Esophagus muscularis mucosa (tissue), 4 donors: ENCODE measurements at regions of chr5 and their contacts with region 1.

Region 1: DNA sequence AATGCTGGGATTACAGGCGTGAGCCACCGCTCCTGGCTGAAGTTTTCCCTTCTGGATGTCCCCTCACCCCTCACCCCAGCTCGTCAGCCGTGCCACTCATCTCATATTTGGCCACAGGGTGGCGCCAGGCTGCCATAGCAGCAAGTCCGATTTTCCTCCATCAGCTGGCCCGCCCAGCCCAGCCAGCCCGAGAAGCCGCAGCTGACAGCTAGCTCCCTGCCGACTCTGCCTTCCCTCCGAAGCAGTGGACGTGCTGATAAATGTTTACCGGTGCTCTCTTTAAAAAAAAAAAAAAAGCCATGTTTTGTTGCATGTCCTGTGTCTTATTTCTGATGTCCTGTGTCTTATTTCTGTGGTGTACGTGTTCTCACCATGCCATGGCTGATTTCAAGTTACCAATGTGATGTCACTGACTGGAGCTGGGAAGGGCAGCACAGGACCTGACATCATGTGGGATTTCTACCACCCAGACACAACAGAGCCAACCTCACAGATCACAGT is 58.3 kb downstream of the PFDN1 start:
- DNase-seq: peak; percentile 97
- H3K4me3 ChIP-seq: no peak overlapping the region
- H3K27ac ChIP-seq: peak overlapping the region in 3 of 4 donors; percentile 67 to 79 (median 78)
- H3K4me1 ChIP-seq: peaks cover 73 to 88% (median 82%) of the 10 kb centered on the region in 4 donors
- H3K27me3 ChIP-seq: no peaks in the 10 kb centered on the region
- CTCF ChIP-seq: peak; percentile 87 to 90 (median 89)
- EP300 ChIP-seq: no peak
- POLR2A ChIP-seq: no peak

Region 2: DNA sequence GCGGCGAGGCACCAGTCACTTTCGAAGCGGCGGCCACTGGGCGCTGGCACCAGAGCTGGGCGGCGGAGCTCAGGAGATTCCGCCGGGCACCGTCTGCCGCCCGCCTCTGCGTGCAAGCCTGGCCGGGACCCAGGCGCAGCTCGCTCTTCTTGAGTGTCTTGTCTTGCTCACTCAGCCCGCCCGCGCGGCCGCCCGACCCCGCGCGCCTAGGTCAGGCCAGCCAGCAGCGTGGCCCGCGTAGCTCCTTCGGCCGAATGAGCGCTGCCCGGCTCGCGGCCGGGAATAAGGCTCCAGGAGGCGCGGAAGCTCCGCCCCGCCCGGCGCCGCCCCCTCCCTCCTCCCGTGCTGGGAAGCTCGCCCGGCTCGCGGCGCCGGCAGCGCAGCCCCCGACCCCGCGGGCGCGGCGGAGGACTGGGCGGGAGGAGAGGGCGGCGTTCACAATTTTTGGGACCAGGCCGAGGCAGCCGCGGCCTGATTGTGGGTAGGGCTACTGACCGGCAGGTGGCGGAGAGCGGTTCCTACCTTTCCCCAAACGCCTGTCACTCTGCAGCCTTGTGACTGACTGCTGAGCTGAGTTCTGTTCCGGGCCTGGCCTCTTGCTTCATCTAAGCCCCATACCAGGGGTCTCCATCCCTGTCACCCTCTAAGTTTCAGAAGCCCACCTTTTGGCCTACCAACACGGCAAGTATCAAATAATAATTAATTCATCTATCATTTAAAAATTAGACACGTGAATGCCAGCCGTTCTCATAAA is 102.0 kb after region 1 on chr5 and contains the start of gene HBEGF:
- intact Hi-C with region 1: loop called (anchors 1 kb)
- DNase-seq: no peak
- H3K4me3 ChIP-seq: peak within 1 kb of the TSS; percentile 65 to 87 (median 77)
- H3K27ac ChIP-seq: peak within 1 kb of the TSS; percentile 76 to 88 (median 86)
- H3K4me1 ChIP-seq: peaks cover 52 to 66% (median 59%) of the 10 kb centered on the region in 4 donors
- H3K27me3 ChIP-seq: no peaks in the 10 kb centered on the region
- CTCF ChIP-seq: peak; percentile 18 to 50 (median 37)
- EP300 ChIP-seq: no peak
- POLR2A ChIP-seq: peak; percentile 76
- total RNA-seq, gene HBEGF: 6.6 to 20.0 (median 8.2) TPM

Region 3: DNA sequence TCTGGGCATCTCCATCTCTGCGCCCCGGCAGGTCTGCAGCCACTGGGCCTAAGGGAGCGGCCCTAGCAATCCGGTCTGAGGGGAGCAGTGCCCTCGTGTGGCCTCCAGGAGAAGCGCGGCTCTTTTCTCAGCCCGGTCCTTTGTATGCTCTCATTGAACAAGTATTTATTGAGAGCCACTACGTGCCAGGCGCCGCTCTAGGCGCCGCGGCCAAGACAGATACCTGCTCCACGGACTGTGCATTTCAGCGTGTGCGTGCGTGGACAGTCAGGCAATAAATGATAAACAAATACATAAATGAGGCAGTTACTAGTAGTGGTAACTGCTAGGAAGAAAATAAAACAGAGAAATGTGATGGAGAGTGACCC is 113.1 kb after region 1 on chr5:
- intact Hi-C with region 1: loop called (anchors 2 kb)
- DNase-seq: peak; percentile 96
- H3K4me3 ChIP-seq: peak overlapping the region; percentile 17 to 29 (median 24)
- H3K27ac ChIP-seq: no peak overlapping the region
- H3K4me1 ChIP-seq: peaks cover 4 to 11% (median 10%) of the 10 kb centered on the region in 4 donors
- H3K27me3 ChIP-seq: no peaks in the 10 kb centered on the region
- CTCF ChIP-seq: peak; percentile 88 to 97 (median 93)
- EP300 ChIP-seq: no peak
- POLR2A ChIP-seq: no peak

Region 4: GRCh38 chr5:140481758-140482157 is 237.2 kb after region 1 on chr5:
- intact Hi-C with region 1: no loop called
- DNase-seq: no peak
- H3K4me3 ChIP-seq: no peak overlapping the region
- H3K27ac ChIP-seq: no peak overlapping the region
- H3K4me1 ChIP-seq: peaks cover 2 to 16% (median 11%) of the 10 kb centered on the region in 4 donors
- H3K27me3 ChIP-seq: no peaks in the 10 kb centered on the region
- CTCF ChIP-seq: no peak
- EP300 ChIP-seq: no peak
- POLR2A ChIP-seq: no peak